Activated T-helper 1 cell treated with anti-CD3 and anti-CD28 coated beads, Interleukin-12 subunit alpha, Interleukin-12 subunit beta, Interleukin-2, Interleukin-4 antibody, amounts not matched to agents 30 ng/mL and 10 ng/mL and 1 ng/mL, durations not matched to agents 14 hours and 24 hours and 36 hours (primary cell): ENCODE measurements at regions of chr20 and their contacts with region 1.

Region 1: DNA sequence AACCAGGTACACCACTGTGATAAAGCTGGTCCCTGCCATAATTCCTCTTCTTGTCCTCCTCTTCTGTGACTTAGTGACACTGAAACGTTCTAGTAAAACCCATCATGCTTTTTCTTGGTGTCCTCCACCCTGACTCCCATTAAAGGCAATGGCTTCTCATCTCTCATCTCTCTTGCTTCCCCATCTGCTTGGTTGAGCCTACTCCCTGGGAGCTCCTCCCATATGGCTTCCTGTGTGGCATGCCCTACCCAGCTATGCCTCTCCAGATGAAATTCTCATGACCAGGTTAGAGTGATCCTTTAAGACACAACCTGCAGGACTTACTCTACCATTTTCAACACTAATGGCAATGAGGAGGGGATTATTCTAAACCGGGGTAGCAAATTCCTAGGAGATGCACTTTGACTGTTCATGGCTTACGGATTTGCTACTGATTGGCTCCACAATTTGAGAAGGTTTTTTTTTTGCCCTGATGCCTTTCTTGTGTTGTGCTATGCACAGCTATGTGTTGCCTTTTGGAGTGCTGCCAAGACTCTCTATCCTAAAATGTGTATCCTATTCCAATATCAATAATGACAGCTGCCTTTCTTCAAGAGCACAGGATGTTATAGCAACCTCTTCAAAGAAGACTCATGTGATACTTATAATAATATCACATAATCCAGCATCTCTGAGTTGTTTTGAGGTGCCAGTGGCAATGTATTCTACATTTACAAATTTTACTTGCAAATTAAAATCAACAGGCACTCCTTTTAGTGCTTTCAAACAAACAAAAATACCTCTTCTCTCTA is 6.1 kb downstream of the SIRPG start:
- DNase-seq: no peak
- H3K4me3 Mint-ChIP-seq: peak overlapping the region; percentile 40
- H3K27ac Mint-ChIP-seq: peak overlapping the region; percentile 81
- H3K4me1 Mint-ChIP-seq: peaks cover 79% of the 10 kb centered on the region
- H3K27me3 Mint-ChIP-seq: no peaks in the 10 kb centered on the region

Region 2: GRCh38 chr20:1623501-1624265 is 27.8 kb before region 1 on chr20:
- intact Hi-C with region 1: loop called (anchors 1 kb)
- DNase-seq: no peak
- H3K4me3 Mint-ChIP-seq: no peak overlapping the region
- H3K27ac Mint-ChIP-seq: peak overlapping the region; percentile 36
- H3K4me1 Mint-ChIP-seq: peaks cover 87% of the 10 kb centered on the region
- H3K27me3 Mint-ChIP-seq: no peaks in the 10 kb centered on the region

Region 3: GRCh38 chr20:1631309-1632151 is 19.9 kb before region 1 on chr20:
- intact Hi-C with region 1: loop called (anchors 2 kb)
- DNase-seq: no peak
- H3K4me3 Mint-ChIP-seq: no peak overlapping the region
- H3K27ac Mint-ChIP-seq: peak overlapping the region; percentile 76
- H3K4me1 Mint-ChIP-seq: peaks cover 47% of the 10 kb centered on the region
- H3K27me3 Mint-ChIP-seq: no peaks in the 10 kb centered on the region